Posterior vena cava (tissue), 2 donors: ENCODE measurements at regions of chr11 and their contacts with region 1.

Region 1: DNA sequence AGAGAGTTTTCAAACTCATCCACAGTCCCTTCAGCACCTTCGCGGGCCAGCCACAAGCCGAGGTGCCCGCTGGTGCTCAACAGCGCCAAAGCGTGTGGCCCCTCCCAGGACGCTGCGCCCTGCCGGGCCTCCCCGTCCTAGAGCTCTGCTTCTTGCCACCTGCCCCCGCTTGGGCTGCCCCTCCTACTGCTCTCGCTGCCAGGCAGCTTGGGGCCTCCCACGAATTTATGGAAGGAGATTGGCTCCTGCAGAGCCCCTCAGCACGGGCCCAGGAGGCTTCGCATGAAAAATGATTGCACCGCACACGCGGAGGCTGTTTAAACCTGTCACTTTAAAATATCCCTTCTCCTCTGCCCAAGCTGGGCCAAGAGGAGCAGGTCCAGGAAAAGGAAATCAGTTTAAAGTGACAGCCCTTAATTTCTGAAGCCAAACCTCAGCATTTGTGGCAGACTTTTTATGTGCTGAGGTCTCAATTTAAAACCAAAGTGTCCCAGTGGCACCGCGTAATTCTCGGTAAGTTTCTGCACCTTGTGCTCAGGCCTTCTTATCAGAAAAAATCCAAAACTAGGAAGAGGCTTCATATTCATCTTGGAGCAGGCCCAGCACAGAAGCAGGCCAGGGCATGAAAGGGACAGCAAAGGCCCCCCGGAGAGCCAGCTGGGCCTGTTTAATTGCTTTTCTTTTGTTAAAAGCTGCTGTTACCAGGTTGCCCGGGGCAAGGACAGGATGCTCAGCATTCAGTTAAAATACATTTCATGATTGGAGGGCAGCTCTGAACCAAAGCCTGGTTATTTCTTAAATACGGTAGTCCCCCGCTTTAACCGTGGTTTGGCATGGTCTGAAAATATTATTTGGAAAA is 303.6 kb downstream of the OPCML start:
- DNase-seq: no peak

Region 2: GRCh38 chr11:132763503-132763902 is 465.2 kb before region 1 on chr11:
- intact Hi-C with region 1: no loop called
- DNase-seq: no peak

Region 3: DNA sequence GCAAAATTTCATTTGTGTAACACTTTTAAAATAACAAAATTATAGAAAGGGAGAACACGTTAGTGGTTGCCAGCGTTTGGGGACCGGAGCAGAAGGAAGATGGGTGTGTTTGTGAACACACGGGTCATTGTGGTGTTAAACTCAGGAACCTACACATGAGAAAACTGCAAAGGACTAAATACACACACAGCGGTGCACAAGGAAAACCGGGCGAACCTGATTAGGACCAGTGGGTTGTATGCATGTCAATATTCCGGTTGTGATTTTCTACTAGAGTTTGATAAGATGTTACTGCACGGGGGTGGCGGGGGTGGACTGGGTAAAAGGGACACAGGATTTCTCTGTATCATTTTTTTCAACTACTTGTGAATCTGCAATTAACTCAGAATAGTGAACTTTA is 47.6 kb before region 1 on chr11:
- intact Hi-C with region 1: no loop called
- DNase-seq: no peak

Region 4: DNA sequence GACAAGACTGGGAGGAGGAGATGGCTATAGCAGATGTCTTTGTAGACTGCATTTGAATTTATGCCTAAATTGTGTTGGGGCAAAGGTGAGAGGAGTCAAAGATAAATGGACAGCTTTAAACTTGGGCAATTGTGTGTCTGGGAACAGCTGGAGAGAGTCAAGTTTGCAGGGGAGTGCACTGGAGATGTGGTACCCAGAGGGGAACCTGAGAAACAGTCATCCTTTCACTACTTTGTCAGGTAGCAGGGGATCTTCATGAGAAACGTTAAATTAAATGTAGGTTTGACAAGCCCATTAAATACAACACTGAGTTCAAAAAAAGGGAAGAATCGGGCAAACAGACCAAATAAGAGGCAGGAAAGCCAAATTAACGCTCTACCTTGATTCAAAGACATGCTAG is 25.9 kb after region 1 on chr11:
- intact Hi-C with region 1: loop called in 1 of 2 experiments (anchors 2 kb)
- DNase-seq: no peak